ENCODE measurements at regions of chr3 and their contacts with region 1.

Region 1: DNA sequence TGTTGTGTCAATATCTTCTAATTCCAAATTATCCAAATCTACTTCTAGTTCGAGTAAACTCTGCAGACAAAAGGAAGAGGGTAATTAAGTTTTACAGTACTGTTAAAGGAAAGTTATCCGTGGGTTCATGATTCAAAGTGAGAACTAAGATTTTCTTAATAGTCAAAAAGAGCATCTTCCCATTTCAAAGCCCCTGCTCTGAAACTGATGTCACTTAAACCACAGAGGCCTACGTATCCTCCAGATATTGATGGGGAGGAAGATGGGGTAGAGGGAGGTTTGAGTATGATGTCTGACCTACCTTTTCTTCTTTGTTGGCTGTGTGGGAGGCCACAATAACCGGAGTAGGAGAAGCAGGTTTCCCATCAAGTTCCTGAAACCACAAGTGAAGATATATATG is 14.1 kb downstream of the MRPS22 start:
- DNase-seq: no peak
- ATAC-seq: no peak
- H3K4me3 ChIP-seq: no peak overlapping the region
- H3K4me3 Mint-ChIP-seq: no peak overlapping the region
- H3K27ac ChIP-seq: no peak overlapping the region
- H3K27ac Mint-ChIP-seq: no peak overlapping the region
- H3K4me1 ChIP-seq: no peaks in the 10 kb centered on the region
- H3K4me1 Mint-ChIP-seq: no peaks in the 10 kb centered on the region
- H3K27me3 ChIP-seq: no peaks in the 10 kb centered on the region
- H3K27me3 Mint-ChIP-seq: no peaks in the 10 kb centered on the region
- CTCF ChIP-seq: no peak

Region 2: DNA sequence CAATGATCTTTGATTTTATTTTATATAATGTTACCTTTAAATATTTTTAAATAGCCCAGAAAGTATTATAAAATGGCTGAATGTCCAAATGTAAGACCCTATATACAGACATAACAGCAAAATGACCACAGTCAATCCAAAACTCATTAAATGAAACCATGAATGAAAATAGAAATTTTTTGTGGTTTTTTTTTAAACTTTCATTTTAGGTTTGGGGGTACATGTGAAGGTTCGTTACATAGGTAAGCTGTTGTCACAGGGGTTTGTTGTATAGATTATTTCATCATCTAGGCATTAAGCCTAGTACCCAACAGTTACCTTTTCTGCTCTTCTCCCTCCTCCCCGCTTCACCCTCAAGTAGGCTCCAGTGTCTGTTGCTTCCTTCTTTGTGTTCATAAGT is 640.6 kb before region 1 on chr3:
- CTCF ChIA-PET with region 1: no interaction called
- POLR2A ChIA-PET with region 1: no interaction called
- intact Hi-C with region 1: no loop called
- DNase-seq: no peak
- ATAC-seq: no peak
- H3K4me3 ChIP-seq: no peak overlapping the region
- H3K4me3 Mint-ChIP-seq: no peak overlapping the region
- H3K27ac ChIP-seq: no peak overlapping the region
- H3K27ac Mint-ChIP-seq: no peak overlapping the region
- H3K4me1 ChIP-seq: no peaks in the 10 kb centered on the region
- H3K4me1 Mint-ChIP-seq: peaks cover 2% of the 10 kb centered on the region
- H3K27me3 ChIP-seq: no peaks in the 10 kb centered on the region
- H3K27me3 Mint-ChIP-seq: no peaks in the 10 kb centered on the region
- CTCF ChIP-seq: no peak

Region 3: GRCh38 chr3:139374099-139374498 is 16.2 kb after region 1 on chr3:
- CTCF ChIA-PET with region 1: interaction called, 3 read pairs
- POLR2A ChIA-PET with region 1: no interaction called
- intact Hi-C with region 1: loop called in 1 of 2 experiments (anchors 2 kb)
- DNase-seq: no peak
- ATAC-seq: no peak
- H3K4me3 ChIP-seq: no peak overlapping the region
- H3K4me3 Mint-ChIP-seq: no peak overlapping the region
- H3K27ac ChIP-seq: no peak overlapping the region
- H3K27ac Mint-ChIP-seq: no peak overlapping the region
- H3K4me1 ChIP-seq: no peaks in the 10 kb centered on the region
- H3K4me1 Mint-ChIP-seq: peaks cover 5% of the 10 kb centered on the region
- H3K27me3 ChIP-seq: no peaks in the 10 kb centered on the region
- H3K27me3 Mint-ChIP-seq: no peaks in the 10 kb centered on the region
- CTCF ChIP-seq: no peak

Measured in CD8-positive, alpha-beta T cell (primary cell).